CD8-positive, alpha-beta memory T cell (primary cell): ENCODE measurements at regions of chr10 and their contacts with region 1.

Region 1: GRCh38 chr10:8331883-8332729 is 277.6 kb downstream of the GATA3 start:
- DNase-seq: peak; percentile 82 to 96 (median 95)
- H3K4me3 ChIP-seq: peak overlapping the region; percentile 83
- H3K4me3 Mint-ChIP-seq: peak overlapping the region; percentile 82 to 94 (median 88)
- H3K27ac ChIP-seq: peak overlapping the region; percentile 94
- H3K27ac Mint-ChIP-seq: peak overlapping the region; percentile 93 to 100 (median 98)
- H3K4me1 ChIP-seq: peaks cover 18% of the 10 kb centered on the region
- H3K4me1 Mint-ChIP-seq: peaks cover 41 to 63% (median 55%) of the 10 kb centered on the region in 3 donors
- H3K27me3 ChIP-seq: no peaks in the 10 kb centered on the region
- H3K27me3 Mint-ChIP-seq: peaks cover 0 to 3% of the 10 kb centered on the region in 2 donors

Region 2: DNA sequence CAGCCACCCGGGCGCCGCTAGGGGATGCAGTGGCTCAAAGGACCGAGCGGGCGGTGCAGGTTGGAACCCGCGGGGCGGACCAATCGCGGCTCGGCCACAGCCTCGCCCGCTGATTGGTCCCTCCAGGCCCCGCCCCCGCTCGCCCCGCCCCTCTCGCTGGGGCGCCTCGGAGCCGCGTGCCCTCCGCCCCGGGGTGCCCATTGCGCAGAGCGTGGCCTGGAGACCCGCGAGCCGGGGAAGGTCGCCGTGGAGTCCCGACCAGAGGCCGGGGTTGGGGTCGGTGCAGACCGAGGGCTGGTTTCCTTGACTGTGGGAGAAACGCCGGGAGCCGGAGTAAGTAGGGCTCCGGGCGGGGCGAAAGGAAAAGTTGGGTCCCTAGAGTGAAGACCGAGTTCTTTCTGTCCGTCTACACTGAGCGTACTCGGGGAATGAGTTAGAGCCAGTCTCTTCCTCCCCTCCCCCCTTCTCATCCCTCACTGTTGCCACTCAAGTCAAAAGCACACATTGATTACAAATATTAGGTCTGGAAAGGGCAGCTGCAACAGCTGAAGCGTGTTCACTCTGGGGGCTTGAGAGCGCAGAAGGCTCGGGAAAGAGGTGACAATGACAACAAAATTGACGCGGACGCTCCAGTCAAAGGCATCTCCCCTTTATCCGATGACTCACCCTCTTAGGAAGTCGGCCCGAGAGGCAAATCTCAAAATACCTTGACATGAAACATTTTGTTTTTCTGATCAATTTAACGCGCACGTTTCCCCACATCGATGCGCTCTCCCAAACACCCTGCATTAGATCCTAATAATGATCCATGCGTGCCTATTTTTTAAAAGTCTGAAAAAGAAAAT is 278.4 kb before region 1 on chr10:
- CTCF ChIA-PET with region 1: interaction called, 14 read pairs
- POLR2A ChIA-PET with region 1: interaction called, 25 read pairs
- DNase-seq: peak; percentile 86 to 94 (median 91)
- H3K4me3 ChIP-seq: peak overlapping the region; percentile 96
- H3K4me3 Mint-ChIP-seq: peak overlapping the region; percentile 91 to 99 (median 97)
- H3K27ac ChIP-seq: peak overlapping the region; percentile 89
- H3K27ac Mint-ChIP-seq: peak overlapping the region; percentile 84 to 100 (median 98)
- H3K4me1 ChIP-seq: peaks cover 59% of the 10 kb centered on the region
- H3K4me1 Mint-ChIP-seq: peaks cover 39 to 61% (median 40%) of the 10 kb centered on the region in 3 donors
- H3K27me3 ChIP-seq: peaks cover 45% of the 10 kb centered on the region
- H3K27me3 Mint-ChIP-seq: peaks cover 29 to 39% of the 10 kb centered on the region in 2 donors

Region 3: DNA sequence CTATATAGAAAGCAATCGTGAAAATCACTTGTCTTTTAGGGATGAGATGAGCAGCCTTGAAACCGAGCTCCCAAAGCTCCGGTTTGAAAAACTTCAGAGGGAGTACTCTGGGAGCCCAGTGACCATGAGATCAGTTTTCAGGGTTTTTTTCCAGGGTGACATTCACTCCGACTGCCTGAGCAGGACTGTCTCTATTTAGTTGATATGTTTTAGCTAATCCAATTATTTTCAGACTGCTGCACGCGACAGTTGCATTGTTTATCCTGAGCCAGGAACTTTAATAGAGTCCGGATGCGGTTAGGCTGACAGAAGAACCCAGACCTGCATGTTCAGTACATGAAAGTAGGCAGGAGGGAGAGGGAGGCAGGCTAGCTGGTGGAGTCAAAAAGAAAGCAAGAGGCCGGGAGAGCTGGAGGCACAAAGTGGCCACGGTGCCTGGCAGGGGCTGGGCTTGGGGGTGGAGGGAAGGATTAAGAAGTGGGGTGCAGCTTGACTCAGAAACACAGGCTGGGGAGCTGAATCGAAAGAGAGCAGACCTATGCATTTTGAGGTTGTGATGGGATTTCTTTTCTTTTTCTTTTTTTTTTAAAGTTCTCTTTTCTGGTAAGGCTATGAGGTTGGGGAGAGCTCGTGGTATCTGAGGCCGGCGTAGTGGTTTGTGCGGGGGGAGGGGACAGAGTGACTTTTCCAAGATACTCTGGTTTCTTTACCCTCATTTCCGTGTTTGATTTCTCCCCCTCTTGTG is 272.0 kb before region 1 on chr10:
- CTCF ChIA-PET with region 1: interaction called, 14 read pairs
- POLR2A ChIA-PET with region 1: interaction called, 25 read pairs
- DNase-seq: peak in 4 of 5 donors; percentile 41 to 73 (median 67)
- H3K4me3 ChIP-seq: peak overlapping the region; percentile 57
- H3K4me3 Mint-ChIP-seq: peak overlapping the region; percentile 90 to 99 (median 94)
- H3K27ac ChIP-seq: peak overlapping the region; percentile 58
- H3K27ac Mint-ChIP-seq: peak overlapping the region; percentile 94 to 97 (median 95)
- H3K4me1 ChIP-seq: peaks cover 77% of the 10 kb centered on the region
- H3K4me1 Mint-ChIP-seq: peaks cover 69 to 83% (median 75%) of the 10 kb centered on the region in 3 donors
- H3K27me3 ChIP-seq: no peaks in the 10 kb centered on the region
- H3K27me3 Mint-ChIP-seq: peaks cover 0 to 8% of the 10 kb centered on the region in 2 donors

Region 4: GRCh38 chr10:8403711-8404371 is 71.7 kb after region 1 on chr10:
- CTCF ChIA-PET with region 1: interaction called, 5 read pairs
- POLR2A ChIA-PET with region 1: interaction called, 16 read pairs
- DNase-seq: no peak
- H3K4me3 ChIP-seq: peak overlapping the region; percentile 40
- H3K4me3 Mint-ChIP-seq: peak overlapping the region; percentile 68 to 83 (median 75)
- H3K27ac ChIP-seq: peak overlapping the region; percentile 72
- H3K27ac Mint-ChIP-seq: peak overlapping the region; percentile 93 to 99 (median 97)
- H3K4me1 ChIP-seq: peaks cover 68% of the 10 kb centered on the region
- H3K4me1 Mint-ChIP-seq: peaks cover 78 to 91% (median 88%) of the 10 kb centered on the region in 3 donors
- H3K27me3 ChIP-seq: no peaks in the 10 kb centered on the region
- H3K27me3 Mint-ChIP-seq: peaks cover 0 to 1% of the 10 kb centered on the region in 2 donors

Region 5: GRCh38 chr10:8829588-8829987 is 497.5 kb after region 1 on chr10:
- CTCF ChIA-PET with region 1: no interaction called
- POLR2A ChIA-PET with region 1: no interaction called
- DNase-seq: no peak
- H3K4me3 ChIP-seq: no peak overlapping the region
- H3K4me3 Mint-ChIP-seq: no peak overlapping the region
- H3K27ac ChIP-seq: no peak overlapping the region
- H3K27ac Mint-ChIP-seq: no peak overlapping the region
- H3K4me1 ChIP-seq: no peaks in the 10 kb centered on the region
- H3K4me1 Mint-ChIP-seq: no peaks in the 10 kb centered on the region
- H3K27me3 ChIP-seq: no peaks in the 10 kb centered on the region
- H3K27me3 Mint-ChIP-seq: peaks cover 4 to 9% of the 10 kb centered on the region in 2 donors